Activated B cell treated with CpG ODN at 0.5 μM for 24 hours (primary cell): ENCODE measurements at regions of chr6 and their contacts with region 1.

Region 1: GRCh38 chr6:28161410-28162079 is 19.9 kb downstream of the ZKSCAN8 start:
- DNase-seq: peak; percentile 79
- ATAC-seq: peak; percentile 96
- H3K4me3 Mint-ChIP-seq: peak overlapping the region; percentile 81
- H3K27ac Mint-ChIP-seq: peak overlapping the region; percentile 62
- H3K4me1 Mint-ChIP-seq: peaks cover 16% of the 10 kb centered on the region
- H3K27me3 Mint-ChIP-seq: no peaks in the 10 kb centered on the region
- CTCF ChIP-seq: no peak

Region 2: DNA sequence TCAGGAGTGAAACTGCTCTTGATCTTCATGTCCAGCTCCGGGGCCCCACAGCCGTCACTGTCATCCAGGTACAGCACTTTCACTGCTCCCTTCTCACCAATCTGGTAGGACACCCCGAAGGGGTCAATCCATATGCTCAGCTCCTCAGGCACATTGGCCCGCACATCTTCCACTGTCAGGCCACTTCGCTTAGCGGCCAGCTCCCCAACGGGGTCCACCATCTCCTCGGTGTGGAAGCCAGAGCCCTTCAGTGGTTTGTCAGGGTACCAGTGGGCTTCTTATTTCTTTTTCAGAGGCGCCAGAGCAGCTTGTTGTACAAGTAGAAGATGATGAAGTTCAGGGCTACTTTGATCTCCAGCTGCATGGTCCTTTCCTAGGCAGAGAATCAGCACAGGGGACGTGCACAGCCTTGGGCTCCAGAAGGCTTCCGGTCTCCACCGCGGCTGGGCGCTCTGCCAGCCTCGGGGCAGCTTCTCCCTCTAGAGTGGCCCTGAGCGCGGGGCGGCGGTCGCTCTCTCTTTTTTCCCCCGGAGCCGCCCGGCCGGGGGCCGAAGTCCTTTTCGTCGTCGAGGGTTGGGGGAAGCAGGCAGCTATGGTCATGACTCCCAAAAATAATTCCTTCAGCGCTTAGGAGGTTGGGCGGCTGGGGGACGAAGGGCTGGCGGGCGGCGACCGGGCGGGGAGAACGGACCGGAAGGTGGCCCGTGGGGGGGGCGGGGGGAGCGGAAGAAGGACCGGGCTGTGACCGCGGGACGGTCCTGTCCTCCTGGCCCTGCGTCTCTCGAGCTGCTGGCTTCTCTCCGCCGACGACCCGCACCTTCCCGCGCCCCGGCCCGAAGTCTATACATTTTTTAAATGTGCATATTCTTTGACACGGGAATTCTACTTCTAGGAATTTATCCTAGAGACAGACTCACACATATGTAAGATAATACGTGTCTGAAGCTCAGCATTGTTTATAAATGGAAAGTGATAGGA is 57.0 kb after region 1 on chr6:
- CTCF ChIA-PET with region 1: no interaction called
- POLR2A ChIA-PET with region 1: no interaction called
- intact Hi-C with region 1: loop called (anchors 5 kb)
- DNase-seq: peak; percentile 44
- ATAC-seq: peak; percentile 82
- H3K4me3 Mint-ChIP-seq: peak overlapping the region; percentile 89
- H3K27ac Mint-ChIP-seq: no peak overlapping the region
- H3K4me1 Mint-ChIP-seq: peaks cover 13% of the 10 kb centered on the region
- H3K27me3 Mint-ChIP-seq: peaks cover 54% of the 10 kb centered on the region
- CTCF ChIP-seq: no peak

Region 3: GRCh38 chr6:28531479-28532128 is 370.1 kb after region 1 on chr6:
- CTCF ChIA-PET with region 1: no interaction called
- POLR2A ChIA-PET with region 1: interaction called, 10 read pairs
- intact Hi-C with region 1: no loop called
- DNase-seq: no peak
- ATAC-seq: no peak
- H3K4me3 Mint-ChIP-seq: no peak overlapping the region
- H3K27ac Mint-ChIP-seq: no peak overlapping the region
- H3K4me1 Mint-ChIP-seq: no peaks in the 10 kb centered on the region
- H3K27me3 Mint-ChIP-seq: peaks cover 57% of the 10 kb centered on the region
- CTCF ChIP-seq: no peak